Dorsolateral prefrontal cortex (tissue), 120 donors: ENCODE measurements at regions of chr17 and their contacts with region 1.

Region 1: DNA sequence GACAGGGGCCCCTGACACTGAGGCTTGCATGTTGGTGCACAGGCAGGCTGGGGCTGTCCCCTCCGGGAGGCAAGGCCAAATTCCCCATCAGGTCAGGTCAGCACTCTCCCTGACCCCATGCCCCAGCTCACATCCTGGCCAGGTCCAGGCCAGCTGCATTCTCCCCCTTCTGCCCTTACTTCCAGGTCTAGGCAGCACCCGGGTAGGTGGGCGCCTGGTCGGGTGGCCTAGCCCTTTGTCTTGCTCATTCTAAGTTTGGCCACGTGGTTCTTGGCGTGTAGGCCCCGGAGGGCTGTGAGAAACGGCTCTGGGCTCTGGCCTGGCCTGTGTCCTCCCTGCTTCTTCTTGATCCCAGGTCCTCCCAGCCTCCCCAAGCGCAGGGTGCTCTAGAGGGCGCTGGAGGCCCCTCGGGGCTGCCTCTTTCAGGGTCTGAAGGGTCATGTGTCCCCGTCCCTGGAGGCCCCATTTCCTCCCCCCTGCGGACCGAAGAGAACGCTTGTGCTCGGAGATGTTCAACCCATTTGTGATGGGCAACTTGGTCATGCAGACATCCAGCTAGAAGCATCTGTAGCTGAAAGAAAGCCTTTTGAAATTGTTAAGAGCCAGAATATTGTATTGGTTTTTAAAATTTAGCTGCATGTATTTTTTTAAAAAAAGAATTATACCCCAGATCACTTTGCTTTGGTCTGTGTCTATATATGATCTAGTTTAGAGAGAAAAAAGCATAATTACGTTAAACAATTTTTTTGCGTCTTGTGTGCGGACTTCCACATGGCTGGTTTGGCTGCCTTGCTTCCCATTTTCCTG is 6.7 kb downstream of the BAHCC1 start:
- DNase-seq: peak in 2 of 10 donors; percentile 57 to 68
- H3K4me3 ChIP-seq: peak overlapping the region in 49 of 59 donors; percentile 1 to 91 (median 76)
- H3K27ac ChIP-seq: peak overlapping the region; percentile 47 to 100 (median 97)
- H3K27me3 ChIP-seq: no peaks in the 10 kb centered on the region
- CTCF ChIP-seq: peak in 52 of 56 donors; percentile 0 to 65 (median 45)

Region 2: GRCh38 chr17:81253358-81254131 is 148.4 kb before region 1 on chr17:
- intact Hi-C with region 1: loop called in 1 of 2 experiments (anchors 5 kb)
- DNase-seq: peak in 7 of 10 donors; percentile 34 to 71 (median 61)
- H3K4me3 ChIP-seq: no peak overlapping the region
- H3K27ac ChIP-seq: peak overlapping the region in 6 of 59 donors; percentile 4 to 81 (median 38)
- H3K27me3 ChIP-seq: no peaks in the 10 kb centered on the region
- CTCF ChIP-seq: peak; percentile 68 to 92 (median 84)

Region 3: DNA sequence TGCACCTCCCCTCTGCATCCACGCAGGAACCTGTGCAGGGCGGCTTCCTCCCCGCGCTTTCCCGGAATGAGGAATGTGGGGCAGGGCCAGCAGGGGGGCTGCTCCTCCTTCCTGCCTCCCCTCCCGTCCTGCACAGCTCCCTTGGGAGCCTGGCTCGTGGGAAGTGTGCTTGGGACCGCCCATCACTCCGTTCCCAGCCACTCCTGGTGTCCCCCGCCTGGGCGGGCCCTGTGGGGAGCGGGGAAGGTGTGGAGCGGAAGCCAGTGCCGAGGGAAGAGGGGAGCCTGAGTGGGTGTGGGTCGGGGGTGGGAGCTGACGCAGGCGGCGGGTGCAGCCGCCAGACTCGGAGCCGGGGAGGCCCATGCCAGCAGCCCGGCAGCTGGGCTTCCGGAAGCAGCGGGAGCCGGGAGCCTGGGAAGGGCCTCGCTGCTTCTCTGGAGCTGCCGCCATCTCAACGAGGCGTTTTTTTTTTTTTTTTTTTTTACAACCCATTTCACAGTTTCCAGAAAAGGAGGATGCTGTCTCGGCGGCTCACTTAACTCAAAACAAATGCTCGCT is 17.5 kb after region 1 on chr17:
- intact Hi-C with region 1: loop called in 1 of 2 experiments (anchors 2 kb)
- DNase-seq: peak in 6 of 10 donors; percentile 58 to 85 (median 76)
- H3K4me3 ChIP-seq: peak overlapping the region in 53 of 59 donors; percentile 1 to 56 (median 39)
- H3K27ac ChIP-seq: peak overlapping the region; percentile 29 to 96 (median 85)
- H3K27me3 ChIP-seq: no peaks in the 10 kb centered on the region
- CTCF ChIP-seq: no peak